Activated CD8-positive, alpha-beta T cell treated with anti-CD3 and anti-CD28 coated beads for 36 hours (primary cell): ENCODE measurements at regions of chr7 and their contacts with region 1.

Region 1: GRCh38 chr7:11212080-11212711 is 238.5 kb downstream of the PHF14 start:
- DNase-seq: peak; percentile 61
- ATAC-seq: peak; percentile 91
- H3K4me3 Mint-ChIP-seq: no peak overlapping the region
- H3K27ac Mint-ChIP-seq: no peak overlapping the region
- H3K4me1 Mint-ChIP-seq: no peaks in the 10 kb centered on the region
- H3K27me3 Mint-ChIP-seq: peaks cover 7% of the 10 kb centered on the region
- CTCF ChIP-seq: peak; percentile 70

Region 2: DNA sequence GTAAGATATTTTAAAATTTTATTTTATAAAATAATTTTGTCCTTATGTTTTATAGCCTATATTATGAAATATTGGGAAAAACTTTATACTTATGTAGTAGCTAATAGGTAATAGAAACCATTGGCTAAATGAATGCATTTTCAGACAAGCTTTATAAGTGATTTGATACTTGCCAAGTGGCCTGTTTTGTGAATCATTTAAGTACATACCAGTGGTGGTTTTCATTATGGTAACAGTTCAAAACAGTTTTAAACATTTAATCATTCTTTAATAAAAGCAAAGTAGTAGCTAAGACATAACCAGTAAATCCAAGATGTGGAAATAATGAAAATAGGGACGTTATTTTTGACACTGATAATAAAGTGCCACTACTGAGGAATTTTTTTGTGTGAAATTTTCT is 56.3 kb before region 1 on chr7:
- CTCF ChIA-PET with region 1: no interaction called
- POLR2A ChIA-PET with region 1: no interaction called
- intact Hi-C with region 1: no loop called
- DNase-seq: no peak
- ATAC-seq: no peak
- H3K4me3 Mint-ChIP-seq: no peak overlapping the region
- H3K27ac Mint-ChIP-seq: no peak overlapping the region
- H3K4me1 Mint-ChIP-seq: no peaks in the 10 kb centered on the region
- H3K27me3 Mint-ChIP-seq: no peaks in the 10 kb centered on the region
- CTCF ChIP-seq: no peak

Region 3: DNA sequence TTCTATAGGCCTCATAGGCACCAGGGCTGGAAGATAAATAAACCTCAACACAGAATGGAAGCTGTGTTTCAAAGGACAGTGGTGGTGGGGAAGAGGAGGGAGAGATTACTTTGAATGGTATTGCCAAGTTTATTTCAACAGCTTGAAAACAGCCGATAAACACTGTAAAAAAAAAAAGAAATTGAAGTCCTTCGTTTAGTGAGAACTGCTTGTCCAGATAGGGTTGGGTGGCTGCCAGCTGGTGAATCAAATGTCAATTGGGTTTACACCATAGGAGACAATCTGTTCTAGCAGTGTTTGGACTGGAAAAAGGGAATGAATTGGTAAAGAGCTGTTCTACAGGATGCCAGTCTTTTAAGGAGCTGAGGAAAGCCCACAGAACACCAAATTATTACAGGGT is 16.3 kb after region 1 on chr7:
- CTCF ChIA-PET with region 1: interaction called, 14 read pairs
- POLR2A ChIA-PET with region 1: no interaction called
- intact Hi-C with region 1: no loop called
- DNase-seq: no peak
- ATAC-seq: no peak
- H3K4me3 Mint-ChIP-seq: no peak overlapping the region
- H3K27ac Mint-ChIP-seq: no peak overlapping the region
- H3K4me1 Mint-ChIP-seq: peaks cover 2% of the 10 kb centered on the region
- H3K27me3 Mint-ChIP-seq: no peaks in the 10 kb centered on the region
- CTCF ChIP-seq: no peak